Activated CD4-positive, alpha-beta T cell treated with anti-CD3 and anti-CD28 coated beads for 36 hours (primary cell): ENCODE measurements at regions of chr6 and their contacts with region 1.

Region 1: DNA sequence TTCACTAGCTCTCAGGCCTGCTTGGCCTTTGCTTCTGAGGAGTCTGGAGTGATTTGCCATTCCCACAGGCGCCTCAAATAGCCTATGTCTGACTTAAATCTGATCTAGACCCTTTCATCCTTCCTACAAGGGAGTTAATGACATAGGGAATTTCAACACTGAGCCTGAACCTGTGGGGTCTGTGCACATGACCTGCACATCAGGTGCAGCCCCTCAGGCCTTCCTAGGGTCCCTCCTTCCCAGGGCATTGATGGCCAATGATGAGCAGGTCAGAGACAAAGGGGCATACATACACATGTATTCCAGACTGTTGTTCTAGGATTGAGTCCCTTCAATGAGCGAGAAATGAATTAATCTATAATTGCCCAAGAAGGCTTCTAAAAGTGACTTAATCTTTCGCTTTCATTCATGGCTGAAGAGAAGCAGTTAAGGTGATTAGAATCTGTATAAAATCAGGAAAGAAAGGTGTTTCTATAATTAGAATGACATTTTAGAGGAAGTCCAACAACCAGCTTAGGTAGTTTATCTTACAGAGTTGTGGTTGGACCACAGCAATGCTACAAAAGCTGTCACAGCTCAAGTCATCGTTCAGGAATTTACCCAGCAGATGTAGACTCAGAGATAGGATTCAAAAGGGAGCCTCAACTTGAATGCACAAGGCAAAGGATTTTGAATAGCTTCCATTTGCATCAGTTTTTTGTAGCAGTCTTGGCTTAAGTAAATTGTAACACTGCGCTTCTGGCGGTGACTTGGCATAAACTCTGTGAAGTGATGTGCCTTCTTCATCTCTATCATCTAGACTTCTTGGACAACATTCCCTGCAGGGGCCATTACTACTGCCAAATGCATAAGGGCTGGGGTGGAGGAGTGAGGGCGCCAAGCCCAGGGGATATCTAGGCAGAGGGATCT is 27.0 kb upstream of the TBC1D7 start:
- DNase-seq: peak; percentile 53
- ATAC-seq: peak; percentile 73
- H3K4me3 Mint-ChIP-seq: peak overlapping the region; percentile 68
- H3K27ac Mint-ChIP-seq: peak overlapping the region; percentile 99
- H3K4me1 Mint-ChIP-seq: peaks cover 48% of the 10 kb centered on the region
- H3K27me3 Mint-ChIP-seq: no peaks in the 10 kb centered on the region

Region 2: DNA sequence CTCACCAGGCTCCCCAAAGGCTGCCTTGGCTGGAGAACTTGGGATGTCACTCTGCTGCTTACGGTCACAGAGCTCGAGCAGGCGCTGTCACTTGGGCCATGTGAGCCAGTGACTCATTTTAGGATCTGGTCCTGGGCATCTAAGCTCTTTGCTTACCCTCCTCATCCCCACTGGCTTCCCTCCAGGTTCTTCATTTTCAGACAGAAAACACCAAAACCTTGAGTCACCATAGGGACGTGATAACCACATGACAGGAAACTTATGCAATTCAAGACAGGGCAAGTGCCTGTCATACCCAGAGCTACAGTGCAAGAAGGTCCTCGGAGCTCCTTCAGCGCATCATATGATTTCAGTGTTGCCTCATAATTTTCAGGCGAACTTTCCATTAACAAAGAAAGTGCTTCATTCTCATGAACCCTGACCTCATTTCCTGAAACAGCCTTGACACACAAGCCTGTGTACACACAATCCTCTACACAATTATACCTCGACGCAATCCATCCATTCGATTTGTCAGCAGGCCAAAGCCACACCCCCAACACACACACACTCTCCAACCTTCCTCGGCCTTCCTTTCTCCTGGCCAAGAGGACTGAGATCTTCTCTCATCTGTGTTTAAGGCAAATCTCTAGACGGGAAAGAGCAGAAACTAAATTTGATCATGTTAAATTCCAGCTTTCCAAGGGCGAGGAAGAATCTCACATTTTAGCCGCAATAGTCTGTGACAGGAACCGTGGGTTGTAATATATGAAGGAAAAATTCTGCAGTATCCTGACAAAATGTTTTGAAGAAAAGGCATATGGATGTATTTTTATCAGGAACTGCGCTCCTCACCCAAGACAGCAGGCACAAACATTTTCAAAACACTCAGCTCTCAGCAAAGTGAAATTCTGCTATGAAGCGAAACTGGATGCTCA is 52.3 kb before region 1 on chr6:
- CTCF ChIA-PET with region 1: interaction called, 3 read pairs
- POLR2A ChIA-PET with region 1: no interaction called
- intact Hi-C with region 1: loop called (anchors 1 to 5 kb)
- DNase-seq: peak; percentile 79
- ATAC-seq: peak; percentile 95
- H3K4me3 Mint-ChIP-seq: no peak overlapping the region
- H3K27ac Mint-ChIP-seq: peak overlapping the region; percentile 94
- H3K4me1 Mint-ChIP-seq: peaks cover 41% of the 10 kb centered on the region
- H3K27me3 Mint-ChIP-seq: no peaks in the 10 kb centered on the region

Region 3: DNA sequence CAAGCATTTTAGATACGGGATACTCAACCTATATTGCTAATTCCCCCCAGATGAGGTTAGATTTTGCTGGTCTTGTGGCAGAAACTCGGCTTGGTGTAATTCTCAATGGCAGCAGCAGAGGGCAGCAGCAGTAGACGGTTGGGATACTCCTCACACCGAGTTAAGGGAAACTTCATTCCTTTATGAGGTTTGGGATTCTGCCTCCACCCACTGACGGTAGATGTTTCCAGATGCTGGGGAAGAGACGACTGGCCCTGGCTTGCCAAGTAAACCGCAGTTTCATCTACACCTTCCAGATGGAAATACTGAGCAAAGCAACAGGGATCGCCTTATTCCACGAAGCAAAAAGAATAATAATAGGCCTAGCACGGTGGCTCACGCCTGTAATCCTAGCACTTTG is 18.7 kb before region 1 on chr6:
- CTCF ChIA-PET with region 1: interaction called, 7 read pairs
- POLR2A ChIA-PET with region 1: no interaction called
- intact Hi-C with region 1: loop called in 1 of 2 experiments (anchors 2 kb)
- DNase-seq: peak; percentile 87
- ATAC-seq: peak; percentile 69
- H3K4me3 Mint-ChIP-seq: no peak overlapping the region
- H3K27ac Mint-ChIP-seq: no peak overlapping the region
- H3K4me1 Mint-ChIP-seq: peaks cover 10% of the 10 kb centered on the region
- H3K27me3 Mint-ChIP-seq: no peaks in the 10 kb centered on the region

Region 4: DNA sequence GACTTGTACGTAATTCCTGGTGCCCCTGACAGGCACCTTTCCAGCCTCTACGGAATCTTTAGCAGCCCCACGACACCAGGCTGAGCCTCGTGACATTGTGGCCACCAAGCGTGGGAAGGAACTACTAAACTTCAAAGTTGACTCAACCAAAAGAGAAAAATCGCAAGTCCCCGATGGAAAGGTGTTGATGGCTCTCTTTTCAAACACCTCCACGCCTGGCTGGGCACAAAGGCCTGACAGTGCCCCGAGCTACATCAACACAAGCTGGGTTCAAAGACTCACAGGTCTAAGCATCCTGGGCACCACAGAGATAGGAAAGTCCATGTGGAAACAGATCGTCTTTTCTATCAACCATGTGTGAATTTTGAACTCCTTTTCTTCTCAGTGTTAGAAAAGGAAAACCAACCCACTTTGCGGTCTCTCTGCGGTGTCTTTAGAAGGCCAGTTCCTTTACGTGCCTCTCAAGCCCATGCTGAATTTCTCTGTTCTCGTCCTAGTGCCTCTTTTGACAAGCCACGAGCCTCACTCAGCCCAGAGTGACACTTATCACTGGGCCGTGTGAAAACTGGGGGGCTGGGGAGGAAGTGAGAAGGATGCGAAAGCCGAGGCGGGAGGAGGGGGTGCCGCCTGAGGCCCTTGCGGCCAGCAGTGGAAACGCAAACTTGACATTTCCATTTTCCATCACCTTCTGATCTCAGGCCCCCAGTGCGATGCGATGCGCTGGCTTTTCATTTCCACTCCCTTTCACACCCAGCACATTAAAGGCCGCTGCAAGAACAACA is 72.7 kb after region 1 on chr6:
- CTCF ChIA-PET with region 1: interaction called, 8 read pairs
- POLR2A ChIA-PET with region 1: interaction called, 6 read pairs
- intact Hi-C with region 1: loop called (anchors 1 kb)
- DNase-seq: peak; percentile 90
- ATAC-seq: peak; percentile 68
- H3K4me3 Mint-ChIP-seq: peak overlapping the region; percentile 58
- H3K27ac Mint-ChIP-seq: peak overlapping the region; percentile 95
- H3K4me1 Mint-ChIP-seq: peaks cover 76% of the 10 kb centered on the region
- H3K27me3 Mint-ChIP-seq: no peaks in the 10 kb centered on the region

Region 5: DNA sequence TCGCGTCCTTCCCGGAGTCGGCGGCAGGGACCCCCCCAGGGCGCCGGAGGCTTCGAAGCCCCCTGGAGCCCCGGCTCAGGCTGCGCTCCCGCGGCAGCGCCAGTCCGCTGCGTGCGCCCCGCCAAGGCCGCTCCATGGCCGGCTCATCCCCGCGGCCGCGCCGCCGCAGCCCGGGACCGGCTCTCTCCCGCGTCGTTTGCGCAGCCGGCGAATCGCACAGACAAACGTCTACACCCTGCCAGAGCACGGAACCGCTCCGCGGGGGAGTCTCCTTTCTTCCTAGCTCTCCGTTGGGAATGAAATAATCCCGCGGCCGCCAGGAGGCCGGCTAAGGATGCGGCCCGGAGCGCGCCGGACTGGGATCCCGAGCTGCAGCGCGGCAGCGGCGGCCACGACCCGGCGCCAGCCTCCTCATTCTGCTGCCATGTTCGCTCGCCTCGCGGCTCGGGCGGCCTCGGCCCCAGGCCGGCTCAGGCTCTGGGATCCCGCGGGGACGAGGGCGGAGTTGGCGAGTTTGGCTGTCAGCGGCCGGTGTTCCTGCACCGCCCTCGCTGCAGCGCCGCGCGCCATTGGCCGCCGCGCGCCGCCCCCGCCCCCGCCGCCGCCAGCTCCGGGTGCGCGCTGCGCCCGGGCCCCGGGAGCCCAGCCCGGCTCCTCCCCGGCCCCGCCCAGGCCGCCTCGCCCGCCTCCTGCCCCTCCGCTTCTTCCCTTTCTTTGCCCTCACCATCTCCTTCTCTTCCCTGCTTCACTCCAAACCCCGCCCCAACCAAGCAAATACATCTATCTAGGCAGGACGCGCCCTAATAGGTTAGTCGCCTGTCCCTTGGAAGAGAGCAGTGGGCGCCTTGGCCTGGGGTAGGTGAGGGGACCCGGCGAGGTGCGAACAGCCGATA is 132.1 kb after region 1 on chr6 and contains the start of gene GFOD1:
- CTCF ChIA-PET with region 1: no interaction called
- POLR2A ChIA-PET with region 1: interaction called, 4 read pairs
- intact Hi-C with region 1: loop called in 1 of 2 experiments (anchors 1 kb)
- DNase-seq: peak; percentile 87
- ATAC-seq: peak; percentile 83
- H3K4me3 Mint-ChIP-seq: peak within 1 kb of the TSS; percentile 83
- H3K27ac Mint-ChIP-seq: peak within 1 kb of the TSS; percentile 74
- H3K4me1 Mint-ChIP-seq: peaks cover 36% of the 10 kb centered on the region
- H3K27me3 Mint-ChIP-seq: peaks cover 8% of the 10 kb centered on the region
- total RNA-seq, gene GFOD1: 4.2 to 5.8 TPM

Region 6: GRCh38 chr6:13767121-13767808 is 412.0 kb after region 1 on chr6:
- CTCF ChIA-PET with region 1: no interaction called
- POLR2A ChIA-PET with region 1: no interaction called
- intact Hi-C with region 1: loop called in 1 of 2 experiments (anchors 10 kb)
- DNase-seq: peak; percentile 47
- ATAC-seq: no peak
- H3K4me3 Mint-ChIP-seq: peak overlapping the region; percentile 63
- H3K27ac Mint-ChIP-seq: peak overlapping the region; percentile 65
- H3K4me1 Mint-ChIP-seq: peaks cover 40% of the 10 kb centered on the region
- H3K27me3 Mint-ChIP-seq: no peaks in the 10 kb centered on the region